HEK293 (cell line): ENCODE measurements at regions of chr2 and their contacts with region 1.

Region 1: GRCh38 chr2:186589612-186590349 is at the start of gene ITGAV:
- H3K4me3 ChIP-seq: peak within 1 kb of the TSS; percentile 68
- H3K27ac ChIP-seq: peak within 1 kb of the TSS; percentile 93
- H3K4me1 ChIP-seq: 0 out of 2 replicates have a peak, but pooled peaks cover 2% of the 10 kb centered on the region
- CTCF ChIP-seq: peak; percentile 74; the same call in 1 of the 2 replicates

Region 2: DNA sequence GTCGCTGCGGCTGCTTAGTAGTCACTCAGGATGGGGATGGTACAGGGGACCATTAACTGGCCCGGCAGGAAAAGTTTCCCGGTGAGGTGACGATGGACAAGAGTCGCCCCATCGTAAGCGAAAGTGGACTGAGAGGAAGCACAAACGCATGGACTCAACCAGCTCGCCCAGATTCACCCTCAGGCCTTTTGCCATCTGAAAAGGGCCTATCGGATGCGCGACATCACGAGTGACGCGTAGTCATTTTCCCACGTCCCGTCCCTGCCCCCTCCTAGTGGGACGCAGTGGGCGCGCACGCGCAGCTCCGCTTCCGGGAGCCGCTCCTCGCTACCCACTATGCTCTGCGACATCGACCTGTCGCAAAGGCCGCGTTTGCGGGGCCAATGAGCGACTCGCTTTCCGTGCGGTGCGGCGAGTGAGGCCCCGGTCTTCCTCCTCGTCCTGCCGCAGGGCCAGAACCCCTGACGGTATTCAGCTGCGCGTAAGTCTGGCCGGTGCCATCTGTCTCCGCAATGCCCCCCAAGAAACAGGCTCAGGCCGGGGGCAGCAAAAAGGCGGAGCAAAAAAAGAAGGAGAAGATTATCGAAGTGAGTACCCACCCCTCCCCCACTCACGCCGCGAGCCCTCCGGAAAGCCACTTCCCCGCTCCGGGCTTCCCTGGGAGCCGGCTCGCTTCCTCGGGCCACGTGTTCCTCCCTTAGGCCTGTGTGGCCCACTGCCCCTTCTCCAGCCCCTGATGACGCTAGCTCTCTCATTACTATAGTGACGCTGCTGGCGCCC is 103.7 kb before region 1 on chr2 and contains the start of gene ZC3H15:
- CTCF ChIA-PET with region 1: no interaction called
- POLR2A ChIA-PET with region 1: interaction called, 28 read pairs
- H3K4me3 ChIP-seq: peak within 1 kb of the TSS; percentile 52
- H3K27ac ChIP-seq: peak within 1 kb of the TSS; percentile 77
- H3K4me1 ChIP-seq: peaks cover 5% of the 10 kb centered on the region
- CTCF ChIP-seq: 0 out of 2 replicates have a peak, but pooled peaks have one; percentile 31

Region 3: DNA sequence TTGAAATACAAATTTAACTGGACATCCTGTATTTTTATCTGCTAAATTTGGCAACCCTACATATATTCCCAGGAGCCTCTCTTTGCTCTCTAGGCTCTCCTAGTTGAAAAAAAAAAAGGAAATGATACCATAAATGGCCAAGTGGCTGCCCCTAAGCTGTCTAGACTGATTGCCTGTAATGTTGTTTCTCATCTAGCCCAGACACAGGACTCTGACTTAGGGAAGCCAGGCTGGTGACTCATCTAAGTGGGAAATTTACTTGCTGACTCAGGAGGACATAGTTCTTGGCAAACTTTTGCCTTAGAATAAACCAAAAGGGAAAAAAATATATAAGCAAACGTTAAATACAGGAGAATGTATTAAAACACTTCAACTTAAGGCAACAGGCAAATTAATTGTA is 14.5 kb before region 1 on chr2:
- CTCF ChIA-PET with region 1: interaction called, 5 read pairs
- POLR2A ChIA-PET with region 1: interaction called, 40 read pairs
- H3K4me3 ChIP-seq: no peak overlapping the region
- H3K27ac ChIP-seq: no peak overlapping the region
- H3K4me1 ChIP-seq: peaks cover 13% of the 10 kb centered on the region
- CTCF ChIP-seq: no peak